B cell (primary cell): ENCODE measurements at regions of chrX and their contacts with region 1.

Region 1: GRCh38 chrX:53317365-53318069 is 36.1 kb upstream of the IQSEC2 start:
- DNase-seq: peak; percentile 73
- ATAC-seq: peak; percentile 84
- H3K4me3 ChIP-seq: no peak overlapping the region
- H3K4me3 Mint-ChIP-seq: no peak overlapping the region
- H3K27ac ChIP-seq: no peak overlapping the region
- H3K27ac Mint-ChIP-seq: no peak overlapping the region
- H3K4me1 ChIP-seq: peaks cover 27 to 46% of the 10 kb centered on the region in 2 donors
- H3K4me1 Mint-ChIP-seq: peaks cover 24% of the 10 kb centered on the region
- H3K27me3 ChIP-seq: peaks cover 0 to 42% (median 27%) of the 10 kb centered on the region in 4 experiments
- H3K27me3 Mint-ChIP-seq: peaks cover 27% of the 10 kb centered on the region
- CTCF ChIP-seq: peak; percentile 76

Region 2: GRCh38 chrX:53284684-53285447 is 32.7 kb before region 1 on chrX:
- CTCF ChIA-PET with region 1: interaction called, 16 read pairs
- POLR2A ChIA-PET with region 1: no interaction called
- intact Hi-C with region 1: no loop called
- DNase-seq: peak; percentile 53
- ATAC-seq: peak; percentile 67
- H3K4me3 ChIP-seq: no peak overlapping the region
- H3K4me3 Mint-ChIP-seq: no peak overlapping the region
- H3K27ac ChIP-seq: no peak overlapping the region
- H3K27ac Mint-ChIP-seq: no peak overlapping the region
- H3K4me1 ChIP-seq: peaks cover 15 to 26% of the 10 kb centered on the region in 2 donors
- H3K4me1 Mint-ChIP-seq: peaks cover 21% of the 10 kb centered on the region
- H3K27me3 ChIP-seq: no peaks in the 10 kb centered on the region
- H3K27me3 Mint-ChIP-seq: no peaks in the 10 kb centered on the region
- CTCF ChIP-seq: peak; percentile 60

Region 3: GRCh38 chrX:53433651-53434639 is 116.4 kb after region 1 on chrX and contains the start of gene HSD17B10:
- CTCF ChIA-PET with region 1: interaction called, 19 read pairs
- POLR2A ChIA-PET with region 1: no interaction called
- intact Hi-C with region 1: loop called (anchors 2 kb)
- DNase-seq: peak; percentile 87
- ATAC-seq: peak; percentile 99
- H3K4me3 ChIP-seq: peak within 1 kb of the TSS; percentile 41 to 77 (median 70)
- H3K4me3 Mint-ChIP-seq: peak within 1 kb of the TSS; percentile 99
- H3K27ac ChIP-seq: peak within 1 kb of the TSS; percentile 74 to 88
- H3K27ac Mint-ChIP-seq: peak within 1 kb of the TSS; percentile 96
- H3K4me1 ChIP-seq: peaks cover 11 to 16% of the 10 kb centered on the region in 2 donors
- H3K4me1 Mint-ChIP-seq: peaks cover 16% of the 10 kb centered on the region
- H3K27me3 ChIP-seq: peaks cover 0 to 5% (median 1%) of the 10 kb centered on the region in 4 experiments
- H3K27me3 Mint-ChIP-seq: peaks cover 7% of the 10 kb centered on the region
- CTCF ChIP-seq: no peak
- total RNA-seq, gene HSD17B10: 48.2 and 49.7 TPM in 2 replicates

Region 4: GRCh38 chrX:53481816-53482465 is 164.4 kb after region 1 on chrX:
- CTCF ChIA-PET with region 1: interaction called, 36 read pairs
- POLR2A ChIA-PET with region 1: no interaction called
- intact Hi-C with region 1: loop called (anchors 1 kb)
- DNase-seq: peak; percentile 51
- ATAC-seq: no peak
- H3K4me3 ChIP-seq: no peak overlapping the region
- H3K4me3 Mint-ChIP-seq: no peak overlapping the region
- H3K27ac ChIP-seq: no peak overlapping the region
- H3K27ac Mint-ChIP-seq: no peak overlapping the region
- H3K4me1 ChIP-seq: no peaks in the 10 kb centered on the region
- H3K4me1 Mint-ChIP-seq: peaks cover 3% of the 10 kb centered on the region
- H3K27me3 ChIP-seq: no peaks in the 10 kb centered on the region
- H3K27me3 Mint-ChIP-seq: peaks cover 4% of the 10 kb centered on the region
- CTCF ChIP-seq: peak; percentile 68